Natural killer cell (primary cell): ENCODE measurements at regions of chr19 and their contacts with region 1.

Region 1: DNA sequence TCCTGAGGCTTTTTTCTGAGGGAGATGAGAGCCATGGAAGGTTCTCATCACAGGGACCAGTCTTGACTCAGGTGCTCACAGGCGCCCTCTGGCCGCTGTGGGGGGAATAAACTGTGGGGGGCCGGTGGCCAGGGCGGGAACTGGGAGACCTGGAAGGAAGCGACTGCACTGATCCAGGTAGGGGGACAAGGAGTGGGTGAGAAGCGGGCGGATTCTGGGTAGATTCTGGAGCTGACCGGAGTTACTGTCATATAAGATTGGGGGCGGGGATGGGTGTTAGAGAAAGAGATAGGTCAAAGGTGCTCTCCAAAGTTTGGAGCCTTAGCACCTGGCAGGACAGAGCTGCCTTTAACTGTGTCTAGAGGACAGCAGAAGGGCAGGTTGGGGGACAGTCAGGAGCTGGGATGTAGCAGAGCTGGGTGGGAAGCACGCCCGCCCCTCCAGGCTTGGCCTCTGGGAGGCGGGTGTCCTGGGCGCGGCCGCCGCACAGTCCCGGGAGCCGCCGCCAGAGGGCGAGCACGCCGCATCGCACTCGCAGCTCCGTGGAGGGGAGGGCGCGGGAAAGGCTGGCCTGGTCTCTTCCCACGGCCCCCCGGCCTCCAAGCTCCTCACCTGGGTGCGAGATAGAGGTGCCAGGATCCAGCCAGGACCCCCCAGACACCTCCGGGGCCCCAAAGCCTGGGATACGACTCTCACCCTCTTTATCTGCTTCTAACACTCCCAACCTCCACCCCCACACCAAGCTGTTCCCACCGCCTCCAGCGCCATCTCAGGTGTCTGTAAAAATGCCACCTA is 4.2 kb upstream of the DAND5 start:
- DNase-seq: peak; percentile 86 to 88
- ATAC-seq: peak; percentile 94 to 96 (median 96)
- H3K4me3 ChIP-seq: peak overlapping the region; percentile 38
- H3K4me3 Mint-ChIP-seq: peak overlapping the region; percentile 89
- H3K27ac ChIP-seq: no peak overlapping the region
- H3K27ac Mint-ChIP-seq: peak overlapping the region in 1 of 2 donors; percentile 82
- H3K4me1 ChIP-seq: peaks cover 11% of the 10 kb centered on the region
- H3K4me1 Mint-ChIP-seq: peaks cover 5 to 12% of the 10 kb centered on the region in 2 donors
- H3K27me3 ChIP-seq: no peaks in the 10 kb centered on the region
- H3K27me3 Mint-ChIP-seq: peaks cover 0 to 2% of the 10 kb centered on the region in 2 donors
- CTCF ChIP-seq: peak; percentile 98

Region 2: DNA sequence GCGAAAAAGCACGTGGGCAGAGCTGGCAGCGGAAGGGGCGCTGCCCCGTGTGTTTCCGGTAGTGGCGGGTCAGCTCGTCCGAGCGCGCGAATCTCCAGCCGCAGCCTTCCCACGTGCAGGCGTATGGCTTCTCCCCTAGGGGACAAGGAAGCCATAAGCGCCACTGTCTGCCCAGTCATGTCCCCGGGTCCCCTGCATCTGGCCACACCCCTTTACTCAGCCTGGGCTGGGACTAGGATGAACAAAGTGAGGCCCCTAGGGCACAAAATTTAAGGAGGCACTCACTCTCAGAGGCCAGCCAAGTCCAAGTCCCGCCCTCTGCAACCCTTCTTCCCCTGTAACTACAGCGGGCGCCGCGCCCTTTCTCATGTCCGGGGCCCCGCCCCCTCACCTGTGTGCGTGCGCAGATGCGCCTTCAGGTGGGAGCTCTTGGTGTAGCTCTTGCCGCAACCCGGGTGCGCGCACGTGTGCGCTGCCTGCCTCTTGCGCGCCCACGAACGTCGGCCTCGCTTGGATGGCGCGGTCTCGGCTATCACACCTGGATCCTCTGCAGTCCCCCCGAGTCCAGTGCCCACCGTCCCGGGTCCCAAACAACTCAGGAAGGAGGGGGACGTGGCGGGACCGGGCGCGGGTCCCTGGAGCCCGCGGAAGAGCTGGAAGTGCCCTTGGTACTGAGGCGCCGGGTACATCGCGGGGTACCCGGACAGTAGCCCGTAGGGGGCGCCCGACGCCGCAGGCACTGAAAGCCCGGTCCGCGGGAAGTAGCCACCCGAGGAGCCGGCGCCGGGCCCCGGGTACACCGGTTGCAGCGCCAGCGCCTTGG is 80.1 kb before region 1 on chr19:
- intact Hi-C with region 1: loop called (anchors 1 kb)
- DNase-seq: peak; percentile 76 to 91
- ATAC-seq: peak; percentile 72 to 81 (median 76)
- H3K4me3 ChIP-seq: peak overlapping the region; percentile 49
- H3K4me3 Mint-ChIP-seq: peak overlapping the region; percentile 90
- H3K27ac ChIP-seq: no peak overlapping the region
- H3K27ac Mint-ChIP-seq: peak overlapping the region in 1 of 2 donors; percentile 63
- H3K4me1 ChIP-seq: peaks cover 44% of the 10 kb centered on the region
- H3K4me1 Mint-ChIP-seq: peaks cover 23 to 33% of the 10 kb centered on the region in 2 donors
- H3K27me3 ChIP-seq: no peaks in the 10 kb centered on the region
- H3K27me3 Mint-ChIP-seq: no peaks in the 10 kb centered on the region
- CTCF ChIP-seq: peak; percentile 76

Region 3: GRCh38 chr19:13044231-13044836 is 79.1 kb after region 1 on chr19:
- intact Hi-C with region 1: no loop called
- DNase-seq: peak; percentile 79 to 83
- ATAC-seq: peak; percentile 83 to 93 (median 92)
- H3K4me3 ChIP-seq: no peak overlapping the region
- H3K4me3 Mint-ChIP-seq: peak overlapping the region; percentile 82
- H3K27ac ChIP-seq: peak overlapping the region; percentile 88
- H3K27ac Mint-ChIP-seq: peak overlapping the region; percentile 76 to 95
- H3K4me1 ChIP-seq: peaks cover 44% of the 10 kb centered on the region
- H3K4me1 Mint-ChIP-seq: peaks cover 33 to 42% of the 10 kb centered on the region in 2 donors
- H3K27me3 ChIP-seq: no peaks in the 10 kb centered on the region
- H3K27me3 Mint-ChIP-seq: peaks cover 0 to 11% of the 10 kb centered on the region in 2 donors
- CTCF ChIP-seq: no peak